K562 (cell line): ENCODE measurements at regions of chr11 and their contacts with region 1.

Region 1: DNA sequence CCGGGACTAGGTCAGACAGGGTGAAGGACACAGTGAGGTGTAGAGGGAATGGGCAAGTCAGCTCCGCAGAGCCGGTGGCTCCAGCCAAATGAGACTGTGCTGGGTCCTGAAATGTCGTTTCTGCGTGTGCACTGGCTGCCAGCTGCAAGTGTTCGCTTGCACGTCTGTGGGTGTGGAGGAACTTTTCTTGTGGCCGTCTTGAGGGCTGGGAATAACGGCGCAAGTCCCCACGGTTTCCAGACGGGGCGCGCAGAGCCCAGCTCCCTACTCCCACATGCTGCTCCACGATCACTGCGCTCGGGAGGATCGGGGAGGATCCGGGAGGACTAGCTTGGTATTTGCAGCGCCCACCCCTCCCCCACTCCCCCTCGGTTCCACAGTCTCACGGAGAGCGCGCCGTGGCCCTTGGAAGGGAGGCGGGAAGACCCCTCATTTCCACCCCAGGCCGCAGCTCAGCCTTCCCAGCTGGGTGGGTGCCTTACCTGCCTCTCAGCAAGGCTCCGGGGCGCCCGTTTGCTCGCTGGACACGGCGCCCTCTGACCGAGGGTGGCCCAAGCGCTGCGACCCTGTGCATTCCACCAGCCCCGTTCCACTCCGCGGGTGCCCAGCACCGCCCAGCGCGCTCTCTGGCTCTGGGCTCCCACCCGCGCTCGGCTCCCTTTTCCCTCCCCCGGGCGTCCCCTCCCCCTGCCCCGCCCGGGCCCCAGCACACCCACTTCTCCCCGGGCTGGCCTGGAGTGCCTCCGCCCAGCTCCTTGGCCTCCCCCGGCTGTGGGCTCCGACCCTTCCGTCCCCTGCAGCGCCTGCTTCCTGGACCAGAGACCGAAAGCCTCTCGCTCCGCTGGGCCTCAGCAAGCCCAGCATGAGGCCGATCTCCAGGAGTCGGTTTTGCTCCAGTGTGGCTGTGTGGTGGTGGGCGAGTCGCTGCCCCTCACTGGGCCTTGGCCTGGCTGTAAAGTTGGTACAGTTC is at the start of gene KCNE3:
- DNase-seq: peak; percentile 64 to 87 (median 82)
- ATAC-seq: peak; percentile 88
- H3K4me3 ChIP-seq: peak within 1 kb of the TSS; percentile 32
- H3K27ac ChIP-seq: peak within 1 kb of the TSS; percentile 36; the same call in 2 of the 3 replicates
- H3K4me1 ChIP-seq: peaks cover 20 to 33% of the 10 kb centered on the region in 2 experiments
- H3K27me3 ChIP-seq: no peaks in the 10 kb centered on the region
- CTCF ChIP-seq: no peak
- EP300 ChIP-seq: no peak
- POLR2A ChIP-seq: no peak; the same call in 1 of the 2 replicates
- RAD21 ChIP-seq: no peak
- polyA plus RNA-seq, gene KCNE3: 1.6 to 2.3 TPM

Region 2: DNA sequence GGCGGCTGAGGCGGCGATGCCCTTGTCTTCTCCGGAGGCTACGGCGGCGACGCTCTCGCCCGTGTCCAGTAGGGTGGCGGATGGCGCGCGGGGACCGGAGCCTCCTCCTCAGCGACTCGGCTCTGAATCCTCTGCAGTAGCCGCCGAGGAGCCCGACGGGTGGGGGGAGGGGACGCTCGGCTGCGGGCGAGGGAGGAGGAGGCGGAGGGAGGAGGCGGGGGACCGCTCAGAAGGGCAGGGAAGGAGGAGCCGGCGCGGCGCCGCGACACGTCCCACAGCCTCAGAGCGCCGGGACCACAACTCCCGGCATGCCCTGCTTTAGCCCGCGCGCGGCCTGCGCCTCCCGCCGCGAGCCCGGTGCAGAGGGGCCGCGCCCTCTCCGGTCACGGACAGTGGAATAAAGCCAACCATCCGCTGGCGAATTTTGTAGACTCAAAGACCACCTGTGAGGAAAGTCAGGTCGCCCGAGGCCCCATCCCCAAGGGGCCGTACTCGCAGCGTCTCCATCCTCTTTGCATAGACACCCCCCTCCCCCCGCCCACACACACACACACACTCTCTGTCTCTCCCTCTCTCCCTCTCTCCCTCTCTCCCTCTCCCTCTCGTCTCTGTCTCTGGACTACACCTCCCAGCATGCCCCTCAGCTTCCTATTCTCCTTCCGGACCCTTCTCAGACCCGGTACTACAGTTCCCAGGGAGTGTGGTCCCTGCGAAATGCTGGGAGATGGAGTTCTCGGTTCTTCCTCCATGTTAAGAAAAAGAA is 869.1 kb before region 1 on chr11 and contains the start of gene FAM168A:
- CTCF ChIA-PET with region 1: no interaction called
- POLR2A ChIA-PET with region 1: no interaction called
- in situ Hi-C with region 1: loop called (anchors 10 kb)
- intact Hi-C with region 1: no loop called
- DNase-seq: peak; percentile 92 to 97 (median 94)
- ATAC-seq: peak; percentile 98
- H3K4me3 ChIP-seq: peak within 1 kb of the TSS; percentile 76
- H3K27ac ChIP-seq: peak within 1 kb of the TSS; percentile 58; the same call in 2 of the 3 replicates
- H3K4me1 ChIP-seq: peaks cover 16 to 21% of the 10 kb centered on the region in 2 experiments
- H3K27me3 ChIP-seq: no peaks in the 10 kb centered on the region
- CTCF ChIP-seq: peak; percentile 12 to 47 (median 14); a peak in 3 of 6 replicates
- EP300 ChIP-seq: no peak
- POLR2A ChIP-seq: peak; percentile 81; the same call in 1 of the 2 replicates
- RAD21 ChIP-seq: peak; percentile 5 to 20; a peak in 1 of 4 replicates
- polyA plus RNA-seq, gene FAM168A: 0.44 to 0.69 TPM

Region 3: DNA sequence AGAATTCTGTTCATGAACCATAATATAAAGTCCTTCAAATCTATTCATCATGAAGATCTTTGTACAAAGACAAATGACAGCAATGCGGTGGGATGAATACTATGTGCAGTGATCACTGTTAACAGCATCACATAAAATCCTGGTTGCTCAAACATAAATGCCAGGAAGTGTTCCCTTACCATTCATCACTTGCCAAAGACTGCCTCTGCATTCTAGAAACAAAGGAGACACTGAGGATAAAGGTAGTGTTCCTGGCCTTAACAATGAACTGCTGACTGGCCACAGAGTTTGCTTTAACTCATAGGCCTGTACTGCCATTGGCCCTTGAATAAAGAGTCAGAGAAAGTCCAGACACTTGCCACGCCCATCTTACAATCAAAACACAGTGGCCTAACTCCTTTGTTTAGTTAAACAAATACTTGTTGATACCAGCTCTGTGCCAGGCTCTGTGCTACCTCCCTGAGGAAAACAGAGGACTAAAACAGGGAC is 325.9 kb before region 1 on chr11:
- CTCF ChIA-PET with region 1: no interaction called
- POLR2A ChIA-PET with region 1: no interaction called
- in situ Hi-C with region 1: no loop called
- intact Hi-C with region 1: no loop called
- DNase-seq: no peak
- ATAC-seq: peak; percentile 41; the same call in 2 of the 3 replicates
- H3K4me3 ChIP-seq: no peak overlapping the region
- H3K27ac ChIP-seq: no peak overlapping the region
- H3K4me1 ChIP-seq: peaks cover 0 to 17% of the 10 kb centered on the region in 2 experiments; a peak in 2 of 5 replicates
- H3K27me3 ChIP-seq: no peaks in the 10 kb centered on the region
- CTCF ChIP-seq: no peak
- EP300 ChIP-seq: no peak
- POLR2A ChIP-seq: no peak
- RAD21 ChIP-seq: no peak

Region 4: DNA sequence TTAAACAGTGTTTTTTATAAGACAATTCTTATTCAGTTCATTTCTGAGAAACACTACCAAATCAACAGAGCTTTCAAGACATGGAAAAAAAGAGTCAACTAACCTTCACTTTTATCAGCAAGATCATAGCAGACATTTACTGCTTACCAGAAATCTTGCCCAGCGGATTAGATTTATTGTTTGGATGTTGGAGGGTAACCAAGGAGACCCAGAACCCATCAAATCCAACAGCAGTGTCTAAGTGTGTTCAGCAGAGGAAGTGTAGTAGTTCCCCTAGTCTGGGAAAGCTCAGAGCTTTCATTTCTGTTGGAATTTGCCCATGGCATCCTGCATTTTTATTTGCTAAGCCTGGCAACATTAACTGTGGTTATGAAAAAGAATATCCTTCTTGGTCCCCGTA is 66.6 kb before region 1 on chr11:
- CTCF ChIA-PET with region 1: no interaction called
- POLR2A ChIA-PET with region 1: no interaction called
- in situ Hi-C with region 1: no loop called
- intact Hi-C with region 1: no loop called
- DNase-seq: no peak
- ATAC-seq: no peak
- H3K4me3 ChIP-seq: no peak overlapping the region
- H3K27ac ChIP-seq: no peak overlapping the region
- H3K4me1 ChIP-seq: peaks cover 0 to 7% of the 10 kb centered on the region in 2 experiments; a peak in 3 of 5 replicates
- H3K27me3 ChIP-seq: no peaks in the 10 kb centered on the region
- CTCF ChIP-seq: no peak
- EP300 ChIP-seq: no peak
- POLR2A ChIP-seq: no peak
- RAD21 ChIP-seq: no peak